ENCODE measurements at regions of chr12 and their contacts with region 1.

Region 1: DNA sequence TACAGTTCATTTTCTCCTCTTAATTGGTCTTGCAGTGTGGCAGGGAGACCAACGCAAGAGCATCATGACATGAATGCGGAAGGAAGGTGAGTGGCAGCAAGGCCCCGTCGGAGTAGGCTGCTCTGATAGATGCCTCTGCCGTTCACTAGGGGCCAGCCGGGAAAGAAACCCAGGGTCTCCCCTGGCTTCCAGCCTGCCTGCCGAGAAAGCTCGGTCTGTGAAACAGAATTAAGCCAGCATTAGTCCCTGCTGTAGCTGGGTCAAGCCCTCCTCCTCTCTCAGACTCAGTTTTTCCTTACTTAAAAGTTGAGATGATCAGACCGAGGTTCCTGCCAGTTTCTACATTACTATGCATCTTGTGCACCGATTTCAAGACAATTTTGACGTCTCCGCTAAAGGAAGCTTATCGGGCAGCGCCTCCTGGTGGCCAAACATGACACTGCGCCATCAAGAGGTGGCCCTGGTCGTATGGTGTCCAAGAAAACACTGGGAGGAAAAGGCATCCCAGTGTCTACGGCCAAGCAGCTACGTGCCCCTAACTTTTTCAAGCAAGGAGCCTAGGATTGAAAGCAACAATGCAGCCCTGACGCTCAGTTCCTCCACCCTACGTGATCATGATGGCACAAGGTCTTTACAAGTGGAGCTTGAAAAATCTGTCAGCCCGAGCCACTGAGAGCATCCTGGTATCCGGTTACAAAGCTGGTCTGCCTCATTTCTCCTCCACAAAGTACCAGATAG is 131.6 kb downstream of the KSR2 start:
- DNase-seq: peak; percentile 51 to 77 (median 72)
- H3K4me3 ChIP-seq: no peak overlapping the region
- H3K27ac ChIP-seq: no peak overlapping the region
- H3K4me1 ChIP-seq: no peaks in the 10 kb centered on the region
- H3K27me3 ChIP-seq: peaks cover 0 to 29% (median 3%) of the 10 kb centered on the region in 5 experiments

Region 2: DNA sequence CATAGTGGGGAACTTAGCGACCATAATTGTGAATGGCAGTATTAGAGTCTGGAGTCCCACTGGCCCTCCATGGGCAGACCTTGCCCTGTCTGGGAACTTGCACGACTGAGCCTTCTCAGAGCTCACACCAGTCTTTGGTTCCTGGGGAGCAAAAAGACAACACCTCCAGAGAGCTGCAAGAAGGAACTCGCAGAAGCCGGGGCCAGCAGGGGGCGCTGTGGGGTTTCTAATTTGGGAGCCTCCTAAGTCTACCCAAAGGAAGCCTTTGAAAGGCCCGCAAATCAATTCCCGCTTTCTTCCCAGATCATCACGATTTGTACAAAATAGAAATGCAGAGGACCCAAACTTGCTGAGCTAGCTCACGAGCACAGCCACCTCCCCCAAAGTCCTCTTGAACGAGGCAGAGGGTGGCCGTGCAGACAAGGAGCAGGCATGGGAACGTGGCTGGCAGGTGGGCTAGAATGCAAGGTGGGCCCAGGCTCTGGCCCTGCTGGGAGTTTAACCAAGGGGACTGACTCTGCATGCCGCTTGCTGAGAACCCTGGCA is 600.6 kb before region 1 on chr12:
- CTCF ChIA-PET with region 1: interaction called, 15 read pairs
- POLR2A ChIA-PET with region 1: no interaction called
- DNase-seq: peak; percentile 46 to 72 (median 64)
- H3K4me3 ChIP-seq: no peak overlapping the region
- H3K27ac ChIP-seq: no peak overlapping the region
- H3K4me1 ChIP-seq: no peaks in the 10 kb centered on the region
- H3K27me3 ChIP-seq: peaks cover 0 to 30% (median 4%) of the 10 kb centered on the region in 5 experiments

Region 3: DNA sequence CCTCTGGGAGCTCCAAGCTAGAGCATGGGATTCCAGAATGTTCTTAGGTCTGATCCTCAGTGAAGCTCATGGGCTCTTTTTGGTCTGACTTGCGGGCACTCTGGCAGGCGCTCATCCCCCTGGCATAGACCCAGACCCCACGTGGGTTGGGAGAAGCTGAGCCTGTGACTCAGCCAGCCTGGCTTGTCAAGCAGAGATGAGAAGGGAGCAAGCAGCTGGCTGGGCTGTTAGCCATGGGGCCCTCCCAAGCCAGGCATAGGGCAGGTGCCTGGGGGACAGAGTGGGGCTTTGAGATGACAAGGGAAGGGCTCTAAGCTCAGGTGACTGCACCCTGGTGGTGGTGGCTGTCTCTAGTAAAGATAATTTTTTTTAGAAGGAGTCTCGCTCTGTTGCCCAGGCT is 395.4 kb before region 1 on chr12:
- CTCF ChIA-PET with region 1: no interaction called
- POLR2A ChIA-PET with region 1: no interaction called
- DNase-seq: no peak
- H3K4me3 ChIP-seq: no peak overlapping the region
- H3K27ac ChIP-seq: no peak overlapping the region
- H3K4me1 ChIP-seq: no peaks in the 10 kb centered on the region
- H3K27me3 ChIP-seq: peaks cover 0 to 4% (median 0%) of the 10 kb centered on the region in 5 experiments

Region 4: DNA sequence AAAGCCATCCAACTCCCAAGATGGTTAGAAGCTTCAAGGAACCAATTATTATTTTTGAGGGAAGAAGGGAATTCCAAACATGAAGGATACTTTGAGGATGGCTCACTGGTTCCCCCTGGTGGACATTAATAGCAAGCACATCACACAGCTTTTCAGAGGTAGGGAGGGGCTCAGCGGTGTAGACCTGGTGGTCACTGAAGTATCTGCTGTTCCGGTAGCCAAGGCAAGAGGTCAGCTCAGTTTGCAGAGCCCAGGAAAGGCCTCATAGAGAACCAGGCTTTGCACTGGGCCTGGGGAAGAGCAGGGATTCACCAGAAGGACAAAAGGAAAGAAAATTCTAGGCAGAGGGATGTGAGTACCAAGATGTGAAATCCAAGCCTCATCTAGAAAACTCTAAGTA is 12.9 kb after region 1 on chr12:
- CTCF ChIA-PET with region 1: interaction called, 32 read pairs
- POLR2A ChIA-PET with region 1: no interaction called
- DNase-seq: peak; percentile 18 to 35 (median 30)
- H3K4me3 ChIP-seq: no peak overlapping the region
- H3K27ac ChIP-seq: no peak overlapping the region
- H3K4me1 ChIP-seq: no peaks in the 10 kb centered on the region
- H3K27me3 ChIP-seq: peaks cover 0 to 29% (median 3%) of the 10 kb centered on the region in 5 experiments

Measured in common myeloid progenitor, CD34-positive (primary cell).